Transverse colon (tissue), 4 donors: ENCODE measurements at regions of chr15 and their contacts with region 1.

Region 1: DNA sequence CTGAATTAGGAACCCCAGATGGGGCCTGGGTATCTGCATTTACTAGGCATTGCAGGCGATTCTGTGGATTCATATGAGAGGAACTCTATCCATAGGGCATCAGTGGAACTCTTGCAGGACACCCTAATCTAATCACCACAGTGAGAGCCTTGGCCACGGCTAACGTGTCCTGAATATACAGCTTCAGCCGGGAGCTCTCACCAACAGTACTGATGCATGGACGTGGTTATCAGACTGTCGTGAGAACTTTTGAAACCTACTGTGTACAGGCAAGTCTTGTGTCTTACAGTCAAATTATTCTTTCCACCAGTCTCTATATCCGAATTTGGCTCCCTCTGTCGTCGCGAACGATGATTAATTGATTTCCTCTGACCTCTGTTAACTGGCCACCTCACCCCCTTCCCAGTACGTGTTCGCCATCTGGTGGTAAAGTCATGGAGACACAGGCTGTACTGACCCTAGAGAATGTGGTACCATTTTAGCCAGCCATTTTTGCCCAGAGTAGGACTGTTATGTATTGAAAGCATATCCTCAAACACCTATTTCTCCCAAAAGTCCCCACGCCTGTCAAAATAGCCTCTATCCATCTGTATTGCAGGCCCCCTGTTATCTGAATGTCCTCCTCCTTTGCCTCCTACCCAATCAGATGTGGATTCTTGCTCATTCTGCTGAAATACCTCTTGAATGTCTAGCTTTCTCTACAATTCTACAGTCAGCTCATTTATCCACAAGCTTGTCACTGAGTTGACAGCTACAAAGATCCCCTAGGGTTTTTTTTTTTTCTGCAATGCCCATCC is 39.7 kb downstream of the GLDN start:
- DNase-seq: peak; percentile 46
- H3K4me3 ChIP-seq: no peak overlapping the region
- H3K27ac ChIP-seq: no peak overlapping the region
- H3K4me1 ChIP-seq: peaks cover 0 to 3% (median 0%) of the 10 kb centered on the region in 4 donors
- H3K27me3 ChIP-seq: peaks cover 4% of the 10 kb centered on the region
- CTCF ChIP-seq: peak; percentile 76 to 94 (median 83)
- EP300 ChIP-seq: no peak
- POLR2A ChIP-seq: no peak

Region 2: DNA sequence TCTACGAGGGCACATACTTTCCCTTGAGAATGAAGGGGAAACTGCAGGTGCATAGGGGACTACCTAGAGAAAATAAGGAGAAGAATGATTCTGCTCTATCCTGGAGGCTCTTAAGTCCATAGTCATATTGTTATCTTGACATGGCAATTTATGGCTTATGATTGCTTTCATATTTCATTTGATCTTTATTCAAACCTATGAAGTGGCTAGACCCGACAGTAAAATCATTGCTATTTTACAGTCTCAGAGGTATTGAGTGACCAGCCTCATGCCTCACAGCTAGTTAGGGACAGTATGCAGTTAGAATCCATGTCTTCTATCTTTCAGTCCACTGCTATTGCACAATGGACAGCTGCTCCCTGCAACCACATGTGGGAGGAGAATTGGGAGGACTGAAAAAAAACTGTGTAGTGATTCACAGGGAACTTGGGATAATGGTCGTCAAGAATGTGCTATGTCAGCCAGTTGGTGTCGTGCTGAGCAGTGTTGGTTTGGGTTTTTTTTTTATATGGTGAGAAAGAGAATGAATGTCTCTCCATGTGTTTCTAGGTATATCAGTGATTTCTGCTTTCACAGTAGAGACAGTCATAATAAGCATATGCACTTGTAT is 552.5 kb before region 1 on chr15:
- in situ Hi-C with region 1: no loop called
- intact Hi-C with region 1: no loop called
- DNase-seq: peak; percentile 18
- H3K4me3 ChIP-seq: no peak overlapping the region
- H3K27ac ChIP-seq: no peak overlapping the region
- H3K4me1 ChIP-seq: peaks cover 0 to 11% (median 3%) of the 10 kb centered on the region in 4 donors
- H3K27me3 ChIP-seq: no peaks in the 10 kb centered on the region
- CTCF ChIP-seq: no peak
- EP300 ChIP-seq: no peak
- POLR2A ChIP-seq: no peak

Region 3: DNA sequence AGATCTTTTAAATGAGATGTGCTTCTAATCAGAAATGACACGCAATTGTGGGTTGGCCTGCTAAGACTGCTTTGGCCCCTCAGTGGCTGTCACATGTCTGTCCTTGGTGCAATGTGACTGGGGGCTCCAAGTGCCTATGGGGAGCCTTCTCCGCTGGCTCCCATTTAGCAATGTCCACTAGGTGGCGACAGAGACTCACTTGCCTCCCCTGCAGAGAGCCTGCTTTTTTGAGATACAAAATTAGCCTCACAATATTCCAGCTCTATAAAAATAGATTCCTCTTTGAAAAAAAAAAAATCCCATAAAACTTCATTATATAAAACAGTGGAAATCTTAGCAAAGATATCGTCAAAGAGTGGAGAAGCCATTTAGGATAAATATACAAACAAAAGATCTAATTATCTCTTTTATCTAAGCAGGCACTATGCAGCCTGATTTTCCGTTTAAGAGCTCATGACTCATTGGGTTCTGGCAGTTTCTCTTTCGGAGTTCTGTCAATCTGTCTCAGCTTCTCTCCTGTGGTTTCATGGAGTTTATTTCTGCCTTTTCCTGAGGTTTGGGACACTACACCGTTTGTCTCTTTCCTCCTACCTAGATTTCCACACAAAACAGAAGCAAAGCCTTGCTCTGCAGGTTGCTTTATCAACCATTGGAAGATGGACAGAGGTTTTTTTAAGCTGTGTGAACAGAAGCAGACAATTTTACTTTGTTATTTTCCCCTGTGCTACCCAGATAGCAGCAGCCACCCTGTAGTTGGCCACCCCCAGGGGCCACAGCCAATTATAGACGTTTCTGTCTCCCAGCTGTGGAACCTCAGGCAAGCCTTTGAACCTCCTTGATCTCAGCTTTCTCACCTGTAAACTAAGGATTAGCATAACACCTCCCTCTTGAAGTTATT is 218.1 kb before region 1 on chr15:
- in situ Hi-C with region 1: loop called in 3 of 4 experiments (anchors 5 to 25 kb)
- intact Hi-C with region 1: loop called (anchors 10 kb)
- DNase-seq: peak; percentile 69
- H3K4me3 ChIP-seq: peak overlapping the region in 1 of 4 donors; percentile 3
- H3K27ac ChIP-seq: no peak overlapping the region
- H3K4me1 ChIP-seq: peaks cover 0 to 7% (median 5%) of the 10 kb centered on the region in 4 donors
- H3K27me3 ChIP-seq: no peaks in the 10 kb centered on the region
- CTCF ChIP-seq: peak; percentile 87 to 98 (median 96)
- EP300 ChIP-seq: no peak
- POLR2A ChIP-seq: no peak

Region 4: DNA sequence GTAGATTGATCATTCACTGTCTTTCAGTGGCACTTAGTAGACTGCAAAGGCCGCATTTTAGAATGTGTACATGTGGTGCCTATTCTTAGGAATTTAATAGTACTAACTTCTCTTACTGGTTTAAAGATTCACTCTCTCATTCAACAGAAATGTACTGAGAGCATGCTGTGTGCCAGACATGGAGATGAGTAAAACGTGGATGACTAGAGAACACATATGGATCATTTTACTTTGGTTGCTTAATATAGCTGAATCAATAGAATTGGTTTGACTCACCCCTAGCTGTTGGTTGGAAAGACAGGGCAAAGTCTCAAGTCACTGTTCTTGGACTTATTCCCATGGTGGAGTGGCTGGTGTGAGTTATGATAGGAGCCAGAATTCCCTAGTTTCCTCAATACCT is 177.4 kb before region 1 on chr15:
- in situ Hi-C with region 1: no loop called
- intact Hi-C with region 1: no loop called
- DNase-seq: no peak
- H3K4me3 ChIP-seq: no peak overlapping the region
- H3K27ac ChIP-seq: no peak overlapping the region
- H3K4me1 ChIP-seq: no peaks in the 10 kb centered on the region
- H3K27me3 ChIP-seq: peaks cover 3% of the 10 kb centered on the region
- CTCF ChIP-seq: no peak
- EP300 ChIP-seq: no peak
- POLR2A ChIP-seq: no peak

Region 5: GRCh38 chr15:51267703-51268083 is 113.5 kb before region 1 on chr15:
- in situ Hi-C with region 1: loop called in 2 of 4 experiments (anchors 10 to 25 kb)
- intact Hi-C with region 1: no loop called
- DNase-seq: no peak
- H3K4me3 ChIP-seq: peak overlapping the region in 3 of 4 donors; percentile 34 to 49 (median 44)
- H3K27ac ChIP-seq: peak overlapping the region in 1 of 4 donors; percentile 12
- H3K4me1 ChIP-seq: peaks cover 0 to 20% (median 11%) of the 10 kb centered on the region in 4 donors
- H3K27me3 ChIP-seq: peaks cover 45% of the 10 kb centered on the region
- CTCF ChIP-seq: no peak
- EP300 ChIP-seq: no peak
- POLR2A ChIP-seq: no peak

Region 6: GRCh38 chr15:51281368-51281967 is 99.7 kb before region 1 on chr15:
- in situ Hi-C with region 1: loop called in 2 of 4 experiments (anchors 5 to 10 kb)
- intact Hi-C with region 1: loop called (anchors 10 kb)
- DNase-seq: peak; percentile 62
- H3K4me3 ChIP-seq: no peak overlapping the region
- H3K27ac ChIP-seq: no peak overlapping the region
- H3K4me1 ChIP-seq: peaks cover 0 to 11% (median 0%) of the 10 kb centered on the region in 4 donors
- H3K27me3 ChIP-seq: peaks cover 11% of the 10 kb centered on the region
- CTCF ChIP-seq: peak; percentile 55 to 67 (median 60)
- EP300 ChIP-seq: no peak
- POLR2A ChIP-seq: no peak

Region 7: DNA sequence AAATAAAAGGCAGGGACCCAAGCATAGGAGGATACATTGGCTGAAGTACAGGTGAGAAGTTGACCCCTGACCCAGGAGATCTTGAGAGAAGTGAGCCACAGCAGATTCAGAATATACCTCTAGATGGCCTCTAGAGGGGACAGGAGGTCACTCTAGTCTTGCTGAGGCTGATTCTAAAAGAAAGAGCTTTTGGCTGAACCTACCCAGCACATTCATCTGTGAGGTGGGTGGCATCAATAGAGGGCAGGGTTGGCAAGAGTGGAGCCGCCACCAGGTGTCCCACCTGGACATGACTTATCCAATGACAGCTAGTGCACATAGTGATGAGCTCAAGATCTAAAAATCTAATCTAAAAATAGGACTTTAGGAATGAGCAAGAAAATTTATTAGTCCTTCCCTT is 94.4 kb before region 1 on chr15:
- in situ Hi-C with region 1: loop called in 1 of 4 experiments (anchors 5 kb)
- intact Hi-C with region 1: loop called (anchors 10 kb)
- DNase-seq: no peak
- H3K4me3 ChIP-seq: no peak overlapping the region
- H3K27ac ChIP-seq: no peak overlapping the region
- H3K4me1 ChIP-seq: peaks cover 0 to 19% (median 8%) of the 10 kb centered on the region in 4 donors
- H3K27me3 ChIP-seq: no peaks in the 10 kb centered on the region
- CTCF ChIP-seq: peak in 2 of 5 experiments; percentile 4 to 9
- EP300 ChIP-seq: no peak
- POLR2A ChIP-seq: no peak

Region 8: GRCh38 chr15:51312166-51313097 is 68.8 kb before region 1 on chr15:
- in situ Hi-C with region 1: no loop called
- intact Hi-C with region 1: no loop called
- DNase-seq: no peak
- H3K4me3 ChIP-seq: no peak overlapping the region
- H3K27ac ChIP-seq: no peak overlapping the region
- H3K4me1 ChIP-seq: no peaks in the 10 kb centered on the region
- H3K27me3 ChIP-seq: no peaks in the 10 kb centered on the region
- CTCF ChIP-seq: no peak
- EP300 ChIP-seq: no peak
- POLR2A ChIP-seq: no peak